Ovary (tissue), 10 donors: ENCODE measurements at regions of chr7 and their contacts with region 1.

Region 1: GRCh38 chr7:23531794-23532489 is at the start of gene TRA2A:
- DNase-seq: peak; percentile 97 to 99 (median 99)
- H3K4me3 ChIP-seq: peak within 1 kb of the TSS; percentile 78
- H3K27ac ChIP-seq: peak within 1 kb of the TSS; percentile 90 to 96
- H3K4me1 ChIP-seq: peaks cover 7% of the 10 kb centered on the region
- H3K27me3 ChIP-seq: no peaks in the 10 kb centered on the region
- CTCF ChIP-seq: peak in 1 of 3 donors; percentile 12
- EP300 ChIP-seq: no peak
- POLR2A ChIP-seq: peak; percentile 98
- total RNA-seq, gene TRA2A: 54.1 to 81.7 (median 71.9) TPM

Region 2: DNA sequence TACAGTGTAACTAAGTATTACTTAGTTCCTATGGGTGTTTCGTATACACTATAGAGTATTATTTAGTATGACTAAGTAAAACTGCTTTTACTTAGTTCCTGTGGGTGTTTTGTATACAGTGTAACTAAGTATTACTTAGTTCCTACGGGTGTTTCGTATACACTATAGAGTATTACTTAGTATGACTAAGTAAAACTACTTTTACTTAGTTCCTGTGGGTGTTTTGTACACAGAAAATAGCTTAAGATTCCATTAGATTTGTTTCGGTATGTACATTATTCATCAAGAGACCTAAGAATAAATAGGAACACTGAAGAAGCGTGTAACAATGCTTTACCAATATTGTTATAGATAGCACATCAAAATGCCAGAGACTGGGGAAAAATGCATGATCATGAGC is 86.6 kb before region 1 on chr7:
- intact Hi-C with region 1: no loop called
- DNase-seq: no peak
- H3K4me3 ChIP-seq: no peak overlapping the region
- H3K27ac ChIP-seq: no peak overlapping the region
- H3K4me1 ChIP-seq: no peaks in the 10 kb centered on the region
- H3K27me3 ChIP-seq: no peaks in the 10 kb centered on the region
- CTCF ChIP-seq: no peak
- EP300 ChIP-seq: no peak
- POLR2A ChIP-seq: no peak

Region 3: GRCh38 chr7:23597094-23598091 is 65.5 kb after region 1 on chr7 and contains the start of gene CCDC126:
- intact Hi-C with region 1: loop called in 1 of 4 experiments (anchors 10 kb)
- DNase-seq: peak; percentile 89 to 94 (median 92)
- H3K4me3 ChIP-seq: peak within 1 kb of the TSS; percentile 71
- H3K27ac ChIP-seq: peak within 1 kb of the TSS; percentile 92 to 93
- H3K4me1 ChIP-seq: peaks cover 3% of the 10 kb centered on the region
- H3K27me3 ChIP-seq: no peaks in the 10 kb centered on the region
- CTCF ChIP-seq: no peak
- EP300 ChIP-seq: peak; percentile 3
- POLR2A ChIP-seq: peak; percentile 47
- total RNA-seq, gene CCDC126: 10.1 to 18.2 (median 12.1) TPM

Region 4: DNA sequence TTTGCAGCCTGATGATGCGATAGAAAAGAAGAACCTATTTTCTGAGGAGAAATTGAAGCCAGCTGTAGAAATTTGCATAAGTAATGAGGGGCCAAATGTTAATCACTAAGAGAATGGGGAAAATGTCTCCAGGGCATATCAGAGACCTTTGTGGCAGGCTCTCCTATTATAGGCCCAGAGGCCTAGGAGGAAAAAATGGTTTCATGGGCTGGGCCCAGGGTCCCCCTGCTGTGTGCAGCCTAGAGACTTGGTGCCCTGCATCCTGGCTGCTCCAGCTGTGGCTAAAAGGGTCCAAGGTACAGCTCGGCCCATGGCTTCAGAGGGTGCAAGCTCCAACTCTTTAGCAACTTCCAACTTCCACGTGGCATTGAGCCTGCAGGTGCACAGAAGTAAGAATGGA is 301.5 kb after region 1 on chr7:
- intact Hi-C with region 1: no loop called
- DNase-seq: no peak
- H3K4me3 ChIP-seq: no peak overlapping the region
- H3K27ac ChIP-seq: no peak overlapping the region
- H3K4me1 ChIP-seq: no peaks in the 10 kb centered on the region
- H3K27me3 ChIP-seq: no peaks in the 10 kb centered on the region
- CTCF ChIP-seq: no peak
- EP300 ChIP-seq: no peak
- POLR2A ChIP-seq: no peak